AG04449 (cell line): ENCODE measurements at regions of chr1 and their contacts with region 1.

Region 1: GRCh38 chr1:156689035-156689952 is 12.1 kb upstream of the NES start:
- DNase-seq: no peak
- H3K4me3 ChIP-seq: peak overlapping the region; percentile 46
- CTCF ChIP-seq: peak; percentile 92

Region 2: GRCh38 chr1:156414461-156415064 is 274.7 kb before region 1 on chr1:
- CTCF ChIA-PET with region 1: no interaction called
- POLR2A ChIA-PET with region 1: no interaction called
- DNase-seq: no peak
- H3K4me3 ChIP-seq: no peak overlapping the region
- CTCF ChIP-seq: no peak

Region 3: GRCh38 chr1:156480411-156481192 is 208.7 kb before region 1 on chr1:
- CTCF ChIA-PET with region 1: no interaction called
- POLR2A ChIA-PET with region 1: no interaction called
- DNase-seq: no peak
- H3K4me3 ChIP-seq: no peak overlapping the region
- CTCF ChIP-seq: peak; percentile 84

Region 4: GRCh38 chr1:156560585-156561183 is 128.6 kb before region 1 on chr1:
- CTCF ChIA-PET with region 1: no interaction called
- POLR2A ChIA-PET with region 1: no interaction called
- DNase-seq: no peak
- H3K4me3 ChIP-seq: no peak overlapping the region
- CTCF ChIP-seq: no peak

Region 5: GRCh38 chr1:156677616-156678596 is 11.4 kb before region 1 on chr1:
- CTCF ChIA-PET with region 1: interaction called, 332 read pairs
- POLR2A ChIA-PET with region 1: interaction called, 3 read pairs
- DNase-seq: no peak
- H3K4me3 ChIP-seq: peak overlapping the region; percentile 39
- CTCF ChIP-seq: peak; percentile 92

Region 6: DNA sequence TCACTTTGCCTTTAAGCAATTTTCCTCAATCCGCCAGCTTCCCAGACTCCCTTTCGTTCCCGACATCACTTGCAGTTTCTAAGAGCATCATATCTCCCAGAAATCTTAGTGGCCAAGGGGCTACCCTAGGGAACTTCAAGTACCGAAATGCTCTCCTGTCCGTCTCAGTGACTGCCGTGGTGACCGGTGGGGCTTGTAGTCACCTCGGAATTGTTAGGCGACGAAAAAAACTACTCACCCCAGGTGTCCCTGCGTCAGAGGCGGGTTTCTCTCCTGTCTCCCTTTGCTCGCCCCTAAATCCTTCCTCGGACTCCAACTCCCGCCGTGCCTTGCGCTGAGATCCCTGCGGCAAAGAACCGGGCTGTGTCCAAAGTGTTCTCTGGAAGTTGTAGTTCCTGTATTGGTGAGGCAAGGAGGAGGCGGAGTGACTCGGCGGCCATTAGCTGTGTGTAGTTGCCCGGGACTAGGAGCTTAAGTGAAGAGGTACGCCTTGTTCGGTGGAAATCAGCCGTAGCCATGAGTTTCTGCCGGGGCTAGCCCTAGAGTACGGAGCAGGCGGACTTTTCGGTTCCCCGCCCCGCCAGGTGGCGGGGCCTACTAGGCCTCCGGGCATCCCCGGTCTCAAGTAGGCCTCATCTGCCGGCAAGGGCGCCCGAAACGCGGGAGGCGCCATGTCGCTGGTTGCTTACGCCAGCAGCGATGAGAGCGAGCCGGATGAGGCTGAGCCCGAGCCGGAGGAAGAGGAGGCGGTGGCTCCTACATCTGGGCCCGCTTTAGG is 78.0 kb after region 1 on chr1 and contains the start of gene PRCC:
- CTCF ChIA-PET with region 1: interaction called, 12 read pairs
- POLR2A ChIA-PET with region 1: no interaction called
- DNase-seq: peak; percentile 99
- H3K4me3 ChIP-seq: peak within 1 kb of the TSS; percentile 95
- CTCF ChIP-seq: no peak

Region 7: DNA sequence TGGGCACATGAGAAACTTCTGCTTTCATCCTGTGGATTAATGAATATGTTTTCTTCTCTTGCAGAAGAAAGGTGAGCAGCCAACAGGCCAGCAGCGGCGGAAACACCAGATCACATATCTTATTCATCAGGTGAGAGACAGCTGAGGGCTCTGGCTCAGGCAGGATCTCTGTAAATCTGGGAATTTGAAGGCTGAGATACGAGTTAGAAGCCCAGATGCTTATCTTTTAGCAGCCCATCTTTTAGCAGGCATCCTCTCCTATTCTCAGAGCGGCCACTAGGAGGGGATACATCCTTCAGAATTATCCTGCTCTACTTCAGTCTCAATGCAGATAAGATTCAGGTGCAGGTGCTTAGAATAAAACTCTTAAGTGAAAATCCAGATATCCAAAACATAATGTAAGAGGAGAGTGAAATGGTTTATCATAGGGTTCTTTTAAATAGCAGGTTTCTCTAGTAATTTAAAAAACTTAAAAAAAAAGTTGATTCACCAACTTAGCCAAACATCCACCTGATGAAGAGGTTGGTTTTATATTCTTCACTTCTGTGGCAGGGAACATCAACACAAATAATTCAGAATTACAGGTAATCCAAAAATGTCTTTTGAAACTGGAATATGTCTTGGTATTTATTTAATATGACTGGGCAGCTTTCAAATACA is 108.0 kb after region 1 on chr1:
- CTCF ChIA-PET with region 1: interaction called, 48 read pairs
- POLR2A ChIA-PET with region 1: no interaction called
- DNase-seq: no peak
- H3K4me3 ChIP-seq: no peak overlapping the region
- CTCF ChIP-seq: peak; percentile 73

Region 8: GRCh38 chr1:156892190-156893047 is 203.1 kb after region 1 on chr1:
- CTCF ChIA-PET with region 1: interaction called, 217 read pairs
- POLR2A ChIA-PET with region 1: interaction called, 3 read pairs
- DNase-seq: no peak
- H3K4me3 ChIP-seq: peak overlapping the region; percentile 30
- CTCF ChIP-seq: peak; percentile 97